HAP-1 (cell line): ENCODE measurements at regions of chr16 and their contacts with region 1.

Region 1: GRCh38 chr16:19822533-19822932 is 62.1 kb downstream of the GPRC5B start:
- DNase-seq: no peak
- H3K4me3 ChIP-seq: no peak overlapping the region
- H3K4me1 ChIP-seq: no peaks in the 10 kb centered on the region
- H3K27me3 ChIP-seq: no peaks in the 10 kb centered on the region

Region 2: GRCh38 chr16:19765860-19766553 is 56.5 kb before region 1 on chr16:
- in situ Hi-C with region 1: loop called (anchors 10 kb)
- DNase-seq: no peak
- H3K4me3 ChIP-seq: no peak overlapping the region
- H3K4me1 ChIP-seq: peaks cover 24% of the 10 kb centered on the region
- H3K27me3 ChIP-seq: no peaks in the 10 kb centered on the region